Transverse colon (tissue), 4 donors: ENCODE measurements at regions of chr3 and their contacts with region 1.

Region 1: DNA sequence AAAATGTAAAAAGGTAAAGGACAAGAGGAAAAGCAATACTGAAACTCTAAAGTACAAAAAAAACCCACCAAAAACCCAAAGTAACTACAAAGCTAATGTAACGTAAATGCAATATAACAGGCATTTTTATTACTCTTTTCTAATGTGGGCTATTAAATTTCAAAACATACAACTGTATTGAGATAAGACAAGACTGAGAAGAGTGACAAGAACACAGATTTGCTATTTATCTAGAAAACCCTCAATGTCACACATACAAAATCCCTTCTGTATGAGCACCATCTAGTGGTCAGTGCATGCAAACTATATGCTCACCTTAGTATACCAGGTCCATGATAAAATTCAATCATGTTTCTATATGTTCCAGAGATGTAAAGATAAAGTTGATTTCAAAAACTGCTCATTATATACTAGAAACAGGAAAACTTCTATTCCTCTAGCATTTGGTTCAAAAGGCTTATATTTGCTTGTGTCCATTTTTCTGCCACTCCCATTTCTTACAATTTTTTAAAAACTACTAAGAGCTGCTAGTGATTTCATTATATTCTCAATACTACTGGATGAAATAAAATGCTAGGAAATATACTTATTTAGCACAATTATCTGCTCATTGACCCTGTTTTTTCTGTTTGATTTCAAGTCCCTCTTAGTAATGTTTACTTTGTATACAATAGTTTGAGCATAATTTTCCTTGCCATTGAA is 111.4 kb downstream of the DLG1 start:
- DNase-seq: no peak
- H3K4me3 ChIP-seq: no peak overlapping the region
- H3K27ac ChIP-seq: no peak overlapping the region
- H3K4me1 ChIP-seq: no peaks in the 10 kb centered on the region
- H3K27me3 ChIP-seq: no peaks in the 10 kb centered on the region
- CTCF ChIP-seq: peak; percentile 61 to 86 (median 79)
- EP300 ChIP-seq: no peak
- POLR2A ChIP-seq: no peak

Region 2: GRCh38 chr3:196988241-196989029 is 198.6 kb before region 1 on chr3:
- in situ Hi-C with region 1: loop called in 2 of 4 experiments (anchors 25 kb)
- intact Hi-C with region 1: loop called (anchors 10 kb)
- DNase-seq: peak; percentile 51
- H3K4me3 ChIP-seq: no peak overlapping the region
- H3K27ac ChIP-seq: peak overlapping the region in 1 of 4 donors; percentile 35
- H3K4me1 ChIP-seq: peaks cover 0 to 11% (median 9%) of the 10 kb centered on the region in 4 donors
- H3K27me3 ChIP-seq: no peaks in the 10 kb centered on the region
- CTCF ChIP-seq: peak in 1 of 5 experiments; percentile 7
- EP300 ChIP-seq: no peak
- POLR2A ChIP-seq: no peak

Region 3: GRCh38 chr3:196995646-196996371 is 191.2 kb before region 1 on chr3:
- in situ Hi-C with region 1: loop called in 2 of 4 experiments (anchors 25 kb)
- intact Hi-C with region 1: loop called (anchors 10 kb)
- DNase-seq: no peak
- H3K4me3 ChIP-seq: no peak overlapping the region
- H3K27ac ChIP-seq: no peak overlapping the region
- H3K4me1 ChIP-seq: no peaks in the 10 kb centered on the region
- H3K27me3 ChIP-seq: no peaks in the 10 kb centered on the region
- CTCF ChIP-seq: no peak
- EP300 ChIP-seq: no peak
- POLR2A ChIP-seq: no peak